ENCODE measurements at regions of chr18 and their contacts with region 1.

Region 1: GRCh38 chr18:42893977-42894376 is 221.5 kb downstream of the RIT2 start:
- DNase-seq: no peak
- ATAC-seq: no peak
- H3K4me3 Mint-ChIP-seq: no peak overlapping the region
- H3K27ac Mint-ChIP-seq: no peak overlapping the region
- H3K4me1 Mint-ChIP-seq: no peaks in the 10 kb centered on the region
- H3K27me3 Mint-ChIP-seq: no peaks in the 10 kb centered on the region

Region 2: GRCh38 chr18:42801706-42802105 is 92.3 kb before region 1 on chr18:
- CTCF ChIA-PET with region 1: no interaction called
- POLR2A ChIA-PET with region 1: no interaction called
- intact Hi-C with region 1: no loop called
- DNase-seq: no peak
- ATAC-seq: no peak
- H3K4me3 Mint-ChIP-seq: no peak overlapping the region
- H3K27ac Mint-ChIP-seq: no peak overlapping the region
- H3K4me1 Mint-ChIP-seq: no peaks in the 10 kb centered on the region
- H3K27me3 Mint-ChIP-seq: no peaks in the 10 kb centered on the region

Region 3: GRCh38 chr18:42914476-42914875 is 20.5 kb after region 1 on chr18:
- CTCF ChIA-PET with region 1: no interaction called
- POLR2A ChIA-PET with region 1: no interaction called
- intact Hi-C with region 1: loop called in 1 of 2 experiments (anchors 1 kb)
- DNase-seq: no peak
- ATAC-seq: no peak
- H3K4me3 Mint-ChIP-seq: no peak overlapping the region
- H3K27ac Mint-ChIP-seq: no peak overlapping the region
- H3K4me1 Mint-ChIP-seq: no peaks in the 10 kb centered on the region
- H3K27me3 Mint-ChIP-seq: no peaks in the 10 kb centered on the region

Region 4: DNA sequence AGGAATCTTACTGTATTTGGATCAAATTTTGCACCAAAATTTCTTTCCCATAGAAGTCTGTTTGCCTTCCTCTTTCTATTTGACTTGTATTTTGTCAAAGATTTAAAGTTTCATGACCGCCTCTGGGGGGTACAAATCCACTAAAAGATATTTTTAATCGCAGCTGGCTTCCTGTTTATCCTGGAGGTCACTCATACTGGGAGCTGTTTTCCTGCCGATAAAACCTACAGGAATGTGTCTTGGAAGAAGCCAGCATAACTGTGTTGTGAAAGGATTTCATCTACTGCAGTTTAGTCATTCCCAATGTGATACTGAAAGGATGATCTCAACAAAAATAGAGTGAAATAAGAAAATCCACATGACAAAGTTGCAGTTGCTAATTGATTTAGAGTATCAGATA is 37.5 kb after region 1 on chr18:
- CTCF ChIA-PET with region 1: no interaction called
- POLR2A ChIA-PET with region 1: no interaction called
- intact Hi-C with region 1: no loop called
- DNase-seq: no peak
- ATAC-seq: no peak
- H3K4me3 Mint-ChIP-seq: no peak overlapping the region
- H3K27ac Mint-ChIP-seq: no peak overlapping the region
- H3K4me1 Mint-ChIP-seq: no peaks in the 10 kb centered on the region
- H3K27me3 Mint-ChIP-seq: no peaks in the 10 kb centered on the region

Measured in activated CD4-positive, alpha-beta T cell treated with anti-CD3 and anti-CD28 coated beads for 36 hours (primary cell).